Activated T-helper 1 cell treated with anti-CD3 and anti-CD28 coated beads, Interleukin-12 subunit alpha, Interleukin-12 subunit beta, Interleukin-2, Interleukin-4 antibody, amounts not matched to agents 30 ng/mL and 10 ng/mL and 1 ng/mL, durations not matched to agents 14 hours and 24 hours and 36 hours (primary cell): ENCODE measurements at regions of chr2 and their contacts with region 1.

Region 1: GRCh38 chr2:104872866-104873688 is 19.2 kb downstream of the POU3F3 start:
- DNase-seq: peak; percentile 42
- H3K4me3 Mint-ChIP-seq: peak overlapping the region; percentile 71
- H3K27ac Mint-ChIP-seq: no peak overlapping the region
- H3K4me1 Mint-ChIP-seq: peaks cover 11% of the 10 kb centered on the region
- H3K27me3 Mint-ChIP-seq: peaks cover 72% of the 10 kb centered on the region

Region 2: DNA sequence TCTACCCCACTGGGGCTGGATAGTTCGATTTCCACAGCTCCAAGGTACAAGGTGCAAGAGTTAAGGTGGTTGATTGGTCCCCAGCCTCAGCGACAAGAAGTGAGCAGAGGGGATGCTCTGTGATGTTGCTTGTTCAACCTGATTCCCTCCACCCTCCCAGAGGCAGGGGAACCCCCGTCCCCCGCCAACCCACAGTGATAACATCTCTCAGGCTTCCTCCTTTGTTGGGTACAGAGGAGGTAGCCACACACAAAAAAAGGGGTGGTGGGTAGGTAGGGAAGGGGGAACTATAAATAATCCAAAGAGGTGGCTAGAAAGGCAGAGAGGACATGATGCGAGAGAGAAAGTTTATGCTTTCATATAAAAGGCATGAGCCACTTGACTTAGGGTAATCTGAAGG is 212.1 kb before region 1 on chr2:
- intact Hi-C with region 1: loop called (anchors 10 kb)
- DNase-seq: no peak
- H3K4me3 Mint-ChIP-seq: no peak overlapping the region
- H3K27ac Mint-ChIP-seq: no peak overlapping the region
- H3K4me1 Mint-ChIP-seq: peaks cover 10% of the 10 kb centered on the region
- H3K27me3 Mint-ChIP-seq: peaks cover 21% of the 10 kb centered on the region

Region 3: GRCh38 chr2:104781151-104781550 is 91.9 kb before region 1 on chr2:
- intact Hi-C with region 1: no loop called
- DNase-seq: no peak
- H3K4me3 Mint-ChIP-seq: no peak overlapping the region
- H3K27ac Mint-ChIP-seq: no peak overlapping the region
- H3K4me1 Mint-ChIP-seq: no peaks in the 10 kb centered on the region
- H3K27me3 Mint-ChIP-seq: peaks cover 2% of the 10 kb centered on the region

Region 4: DNA sequence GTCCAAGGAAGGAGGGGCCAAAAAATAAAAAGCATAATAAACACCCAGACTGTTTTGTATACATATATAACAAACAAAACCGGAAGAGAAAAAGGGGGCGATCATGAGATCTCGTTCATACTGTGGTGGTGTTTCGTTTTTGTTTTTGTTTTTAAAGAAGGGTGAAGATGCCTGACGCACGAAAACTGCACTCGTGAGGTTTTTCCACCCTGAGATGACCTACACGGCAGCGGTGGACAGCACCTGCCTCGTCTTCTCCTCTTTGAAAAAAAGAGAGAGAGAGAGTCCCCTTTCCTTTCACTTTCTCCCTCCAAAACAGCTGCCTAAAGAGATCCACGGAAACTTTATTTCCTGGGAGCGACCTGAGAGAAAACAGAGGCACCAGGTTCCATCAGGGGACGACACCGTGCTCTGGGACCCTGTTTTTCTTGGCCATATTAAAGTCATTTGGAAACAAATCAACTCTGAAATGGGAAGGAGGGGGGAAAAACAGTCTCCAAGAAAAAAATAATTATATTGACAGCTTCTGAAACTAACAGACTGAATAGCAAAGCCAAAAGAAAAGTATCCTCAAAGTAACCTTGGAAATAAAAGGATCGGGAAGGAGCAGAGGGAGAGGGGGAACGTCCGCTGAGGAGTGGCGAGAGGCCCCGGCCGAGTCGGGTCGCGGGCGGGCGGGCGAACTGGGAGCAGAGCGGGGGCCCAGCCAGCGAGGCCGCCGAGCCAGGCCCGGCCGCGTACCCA is 15.6 kb before region 1 on chr2:
- intact Hi-C with region 1: loop called (anchors 2 kb)
- DNase-seq: no peak
- H3K4me3 Mint-ChIP-seq: peak overlapping the region; percentile 63
- H3K27ac Mint-ChIP-seq: peak overlapping the region; percentile 67
- H3K4me1 Mint-ChIP-seq: peaks cover 28% of the 10 kb centered on the region
- H3K27me3 Mint-ChIP-seq: peaks cover 69% of the 10 kb centered on the region

Region 5: DNA sequence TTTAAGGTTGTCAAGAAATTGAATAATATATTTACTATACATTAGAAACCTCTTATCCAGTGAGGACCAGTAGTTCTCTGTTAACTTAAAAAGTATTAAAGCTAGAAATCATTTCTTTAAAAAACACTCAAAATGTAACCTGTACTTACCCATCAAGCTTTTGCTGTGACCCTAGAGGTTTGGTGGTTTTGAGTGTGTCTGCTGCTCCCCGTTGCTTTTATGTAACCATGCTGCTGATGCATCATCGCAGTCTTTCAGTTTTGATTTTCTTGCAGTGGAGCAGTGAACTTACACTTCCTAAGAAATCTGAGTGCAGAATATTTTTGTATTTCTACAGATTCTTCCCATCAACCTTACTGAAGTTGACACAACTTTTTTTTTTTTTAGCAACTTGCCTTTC is 199.0 kb after region 1 on chr2:
- intact Hi-C with region 1: no loop called
- DNase-seq: peak; percentile 21
- H3K4me3 Mint-ChIP-seq: no peak overlapping the region
- H3K27ac Mint-ChIP-seq: no peak overlapping the region
- H3K4me1 Mint-ChIP-seq: peaks cover 34% of the 10 kb centered on the region
- H3K27me3 Mint-ChIP-seq: no peaks in the 10 kb centered on the region